Colonic mucosa (tissue), 4 donors: ENCODE measurements at regions of chr6 and their contacts with region 1.

Region 1: DNA sequence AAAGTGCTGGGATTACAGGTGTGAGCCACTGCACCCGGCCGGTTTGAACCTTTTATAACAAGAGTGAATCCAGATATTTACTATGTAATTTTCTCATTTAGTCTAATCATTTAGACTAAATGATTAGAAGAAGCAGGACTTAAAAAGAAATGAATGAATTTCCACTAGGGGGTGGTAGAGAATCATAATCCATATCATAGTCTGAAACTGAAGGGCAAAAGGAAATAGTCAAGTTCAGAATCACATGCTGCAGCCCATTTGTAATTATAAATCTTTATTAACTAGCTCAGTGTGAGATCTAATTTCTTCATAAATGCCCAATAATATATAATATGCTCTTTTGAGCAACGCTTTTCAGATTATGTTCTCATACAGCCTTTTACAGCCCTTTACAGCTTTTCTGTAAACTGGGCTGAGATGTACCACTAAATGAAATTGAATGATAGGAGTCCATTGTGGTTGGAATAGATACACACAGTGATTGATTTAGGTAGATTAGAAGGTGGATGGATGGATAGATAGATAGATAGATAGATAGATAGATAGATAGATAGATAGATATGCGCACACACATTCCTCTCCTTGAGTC is 31.8 kb downstream of the PSMB9 start:
- DNase-seq: no peak
- H3K4me3 ChIP-seq: no peak overlapping the region
- H3K27ac ChIP-seq: no peak overlapping the region
- H3K4me1 ChIP-seq: no peaks in the 10 kb centered on the region
- H3K27me3 ChIP-seq: no peaks in the 10 kb centered on the region
- CTCF ChIP-seq: peak; percentile 66

Region 2: GRCh38 chr6:32713241-32713640 is 172.6 kb before region 1 on chr6:
- intact Hi-C with region 1: no loop called
- DNase-seq: no peak
- H3K4me3 ChIP-seq: no peak overlapping the region
- H3K27ac ChIP-seq: no peak overlapping the region
- H3K4me1 ChIP-seq: no peaks in the 10 kb centered on the region
- H3K27me3 ChIP-seq: no peaks in the 10 kb centered on the region
- CTCF ChIP-seq: no peak

Region 3: DNA sequence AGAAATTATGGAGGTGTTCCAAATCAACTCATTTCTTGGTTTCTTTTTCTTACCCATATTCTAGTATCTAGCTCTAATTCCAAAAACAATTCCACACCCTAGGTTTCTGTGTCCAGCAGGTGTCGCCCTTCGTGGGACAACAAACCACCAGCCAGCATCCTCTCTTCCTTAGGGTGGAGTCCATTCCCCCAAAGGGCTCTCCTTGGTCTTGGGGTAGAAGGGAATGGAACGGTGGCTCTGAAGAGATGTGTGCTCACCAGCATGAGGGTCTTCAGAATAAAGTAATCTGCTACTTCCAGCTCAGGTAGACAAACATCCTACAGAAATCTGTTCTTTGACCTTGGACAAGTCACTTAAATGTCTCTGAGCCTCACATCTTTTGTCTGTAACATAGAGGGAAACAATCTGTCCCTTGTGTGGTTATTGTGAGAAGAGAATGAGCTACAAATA is 47.9 kb after region 1 on chr6:
- intact Hi-C with region 1: loop called (anchors 5 kb)
- DNase-seq: peak; percentile 89
- H3K4me3 ChIP-seq: no peak overlapping the region
- H3K27ac ChIP-seq: no peak overlapping the region
- H3K4me1 ChIP-seq: no peaks in the 10 kb centered on the region
- H3K27me3 ChIP-seq: no peaks in the 10 kb centered on the region
- CTCF ChIP-seq: peak; percentile 74

Region 4: GRCh38 chr6:32947552-32948465 is 62.0 kb after region 1 on chr6:
- intact Hi-C with region 1: loop called (anchors 5 kb)
- DNase-seq: peak; percentile 70
- H3K4me3 ChIP-seq: no peak overlapping the region
- H3K27ac ChIP-seq: no peak overlapping the region
- H3K4me1 ChIP-seq: peaks cover 3% of the 10 kb centered on the region
- H3K27me3 ChIP-seq: no peaks in the 10 kb centered on the region
- CTCF ChIP-seq: peak; percentile 69

Region 5: DNA sequence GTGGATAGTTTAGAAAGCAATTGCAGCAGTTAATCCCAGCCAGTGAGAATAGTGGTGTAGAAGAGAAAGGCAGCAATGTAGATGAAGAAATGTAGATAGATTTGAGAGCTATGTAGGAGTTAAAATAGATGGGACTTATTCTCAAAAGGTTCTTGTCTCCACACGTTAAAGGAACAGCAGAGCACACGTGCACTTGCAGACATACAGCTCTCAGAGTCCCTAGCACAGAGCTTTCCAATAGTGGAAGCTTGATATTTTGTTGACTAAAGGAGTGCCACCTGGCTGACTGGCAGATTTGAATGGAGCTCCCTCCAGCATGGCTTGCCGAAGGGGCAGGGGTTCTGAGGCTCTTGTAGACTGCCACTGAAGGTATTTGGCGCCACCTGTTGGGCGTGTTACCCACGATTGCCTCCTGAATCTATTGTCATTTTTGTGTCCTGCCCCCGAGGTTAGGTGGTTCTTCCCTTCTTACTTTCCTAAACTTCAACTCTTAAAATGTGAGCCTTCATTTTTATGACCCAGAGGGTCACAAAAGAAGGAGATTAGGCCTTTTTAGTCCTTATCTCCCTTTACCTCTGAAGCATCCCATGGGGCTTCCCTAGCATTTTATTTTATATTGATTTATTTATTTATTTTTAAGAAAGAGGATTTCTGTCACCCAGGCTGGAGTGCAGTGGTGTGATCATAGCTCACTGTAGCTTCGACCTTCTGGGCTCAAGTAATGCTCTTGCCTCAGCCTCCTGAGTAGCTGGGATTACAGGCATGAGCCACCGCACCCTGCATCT is 99.0 kb after region 1 on chr6:
- intact Hi-C with region 1: loop called (anchors 1 kb)
- DNase-seq: peak; percentile 97
- H3K4me3 ChIP-seq: no peak overlapping the region
- H3K27ac ChIP-seq: peak overlapping the region; percentile 20
- H3K4me1 ChIP-seq: peaks cover 26% of the 10 kb centered on the region
- H3K27me3 ChIP-seq: no peaks in the 10 kb centered on the region
- CTCF ChIP-seq: peak; percentile 91